ENCODE measurements at regions of chr3 and their contacts with region 1.

Region 1: GRCh38 chr3:50568947-50569749 is at the start of gene HEMK1:
- DNase-seq: peak; percentile 99
- H3K4me3 ChIP-seq: peak within 1 kb of the TSS; percentile 62 to 86 (median 75)
- H3K27ac ChIP-seq: peak within 1 kb of the TSS; percentile 87 to 94 (median 89)
- H3K4me1 ChIP-seq: peaks cover 0 to 45% (median 35%) of the 10 kb centered on the region in 4 donors
- H3K27me3 ChIP-seq: no peaks in the 10 kb centered on the region
- CTCF ChIP-seq: no peak
- EP300 ChIP-seq: peak in 2 of 4 donors; percentile 66 to 89
- POLR2A ChIP-seq: peak; percentile 72 to 81
- total RNA-seq, gene HEMK1: 5.0 to 13.3 (median 7.2) TPM

Region 2: GRCh38 chr3:50600841-50601591 is 31.9 kb after region 1 on chr3:
- intact Hi-C with region 1: loop called (anchors 1 kb)
- DNase-seq: peak; percentile 99
- H3K4me3 ChIP-seq: peak overlapping the region in 2 of 4 donors; percentile 22 to 24
- H3K27ac ChIP-seq: peak overlapping the region; percentile 89 to 98 (median 96)
- H3K4me1 ChIP-seq: peaks cover 0 to 56% (median 45%) of the 10 kb centered on the region in 4 donors
- H3K27me3 ChIP-seq: no peaks in the 10 kb centered on the region
- CTCF ChIP-seq: no peak
- EP300 ChIP-seq: peak in 2 of 4 donors; percentile 42 to 94
- POLR2A ChIP-seq: no peak

Region 3: GRCh38 chr3:50674349-50675178 is 105.4 kb after region 1 on chr3 and contains the start of gene DOCK3:
- intact Hi-C with region 1: loop called (anchors 5 kb)
- DNase-seq: peak; percentile 82
- H3K4me3 ChIP-seq: peak within 1 kb of the TSS; percentile 33 to 66 (median 64)
- H3K27ac ChIP-seq: peak within 1 kb of the TSS; percentile 46 to 63 (median 48)
- H3K4me1 ChIP-seq: peaks cover 0 to 18% (median 13%) of the 10 kb centered on the region in 4 donors
- H3K27me3 ChIP-seq: peaks cover 0 to 34% (median 16%) of the 10 kb centered on the region in 3 donors
- CTCF ChIP-seq: no peak
- EP300 ChIP-seq: no peak
- POLR2A ChIP-seq: no peak
- total RNA-seq, gene DOCK3: 1.8 to 4.4 (median 3.6) TPM

Region 4: GRCh38 chr3:50786631-50787030 is 217.5 kb after region 1 on chr3:
- intact Hi-C with region 1: no loop called
- DNase-seq: no peak
- H3K4me3 ChIP-seq: no peak overlapping the region
- H3K27ac ChIP-seq: no peak overlapping the region
- H3K4me1 ChIP-seq: no peaks in the 10 kb centered on the region
- H3K27me3 ChIP-seq: no peaks in the 10 kb centered on the region
- CTCF ChIP-seq: no peak
- EP300 ChIP-seq: no peak
- POLR2A ChIP-seq: no peak

Measured in sigmoid colon (tissue), 7 donors.